CD8-positive, alpha-beta T cell (primary cell): ENCODE measurements at regions of chr11 and their contacts with region 1.

Region 1: DNA sequence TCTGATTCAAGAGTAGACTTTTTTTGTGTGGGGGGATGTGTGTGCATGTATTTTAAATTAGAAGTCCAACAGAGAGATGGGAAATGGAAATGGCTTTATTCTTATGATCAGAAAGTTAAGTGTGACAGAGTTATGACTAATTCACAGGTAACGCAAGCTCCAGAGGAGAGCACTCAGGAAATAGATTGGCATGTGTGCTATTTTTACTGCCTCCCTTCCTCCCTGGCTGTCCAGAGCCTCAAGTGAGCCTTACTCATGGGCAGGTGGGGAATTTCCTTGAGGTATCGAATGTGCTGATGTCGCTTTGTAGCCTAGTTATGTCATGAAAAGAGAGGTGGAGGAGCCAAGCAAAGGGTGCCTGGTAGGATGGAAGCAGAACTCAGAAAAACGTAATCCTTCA is 70.3 kb upstream of the BDNF start:
- DNase-seq: no peak
- ATAC-seq: no peak
- H3K4me3 ChIP-seq: no peak overlapping the region
- H3K4me3 Mint-ChIP-seq: no peak overlapping the region
- H3K27ac ChIP-seq: no peak overlapping the region
- H3K27ac Mint-ChIP-seq: no peak overlapping the region
- H3K4me1 ChIP-seq: no peaks in the 10 kb centered on the region
- H3K4me1 Mint-ChIP-seq: no peaks in the 10 kb centered on the region
- H3K27me3 ChIP-seq: no peaks in the 10 kb centered on the region
- H3K27me3 Mint-ChIP-seq: no peaks in the 10 kb centered on the region
- CTCF ChIP-seq: no peak

Region 2: DNA sequence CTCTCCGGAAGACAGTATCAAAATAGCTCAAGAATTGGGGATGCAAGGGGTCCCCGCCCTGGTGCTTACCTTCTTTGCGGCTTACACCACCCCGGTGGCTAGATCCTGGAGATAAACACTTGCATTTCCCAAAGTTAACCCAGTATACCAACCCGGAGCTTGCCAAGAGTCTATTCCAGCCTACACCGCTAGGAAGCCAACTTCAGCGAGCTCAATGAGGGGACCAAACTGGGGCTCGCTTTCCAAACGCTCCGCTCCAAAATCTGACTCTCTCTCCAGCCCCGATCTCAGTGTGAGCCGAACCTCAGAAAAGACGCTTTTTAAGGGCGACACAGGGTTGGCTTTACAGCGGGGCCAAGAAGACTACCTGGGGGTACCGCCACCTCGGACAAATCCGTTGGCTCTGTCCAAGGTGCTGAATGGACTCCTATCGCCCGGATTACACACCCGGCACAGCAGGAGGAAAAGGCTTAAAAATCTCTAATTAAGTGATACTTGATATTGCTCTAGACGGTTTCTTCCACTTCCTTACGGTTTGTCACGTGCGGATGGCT is 50.2 kb before region 1 on chr11:
- CTCF ChIA-PET with region 1: no interaction called
- POLR2A ChIA-PET with region 1: no interaction called
- intact Hi-C with region 1: no loop called
- DNase-seq: no peak
- ATAC-seq: no peak
- H3K4me3 ChIP-seq: no peak overlapping the region
- H3K4me3 Mint-ChIP-seq: no peak overlapping the region
- H3K27ac ChIP-seq: no peak overlapping the region
- H3K27ac Mint-ChIP-seq: no peak overlapping the region
- H3K4me1 ChIP-seq: no peaks in the 10 kb centered on the region
- H3K4me1 Mint-ChIP-seq: peaks cover 15% of the 10 kb centered on the region
- H3K27me3 ChIP-seq: peaks cover 16 to 20% of the 10 kb centered on the region in 2 experiments
- H3K27me3 Mint-ChIP-seq: peaks cover 65% of the 10 kb centered on the region
- CTCF ChIP-seq: no peak

Region 3: GRCh38 chr11:27735281-27735680 is 35.3 kb before region 1 on chr11:
- CTCF ChIA-PET with region 1: no interaction called
- POLR2A ChIA-PET with region 1: no interaction called
- intact Hi-C with region 1: loop called in 1 of 2 experiments (anchors 1 kb)
- DNase-seq: no peak
- ATAC-seq: no peak
- H3K4me3 ChIP-seq: no peak overlapping the region
- H3K4me3 Mint-ChIP-seq: no peak overlapping the region
- H3K27ac ChIP-seq: no peak overlapping the region
- H3K27ac Mint-ChIP-seq: no peak overlapping the region
- H3K4me1 ChIP-seq: no peaks in the 10 kb centered on the region
- H3K4me1 Mint-ChIP-seq: no peaks in the 10 kb centered on the region
- H3K27me3 ChIP-seq: no peaks in the 10 kb centered on the region
- H3K27me3 Mint-ChIP-seq: peaks cover 3% of the 10 kb centered on the region
- CTCF ChIP-seq: no peak

Region 4: GRCh38 chr11:27830206-27830605 is 59.6 kb after region 1 on chr11:
- CTCF ChIA-PET with region 1: no interaction called
- POLR2A ChIA-PET with region 1: no interaction called
- intact Hi-C with region 1: no loop called
- DNase-seq: no peak
- ATAC-seq: no peak
- H3K4me3 ChIP-seq: no peak overlapping the region
- H3K4me3 Mint-ChIP-seq: no peak overlapping the region
- H3K27ac ChIP-seq: no peak overlapping the region
- H3K27ac Mint-ChIP-seq: no peak overlapping the region
- H3K4me1 ChIP-seq: no peaks in the 10 kb centered on the region
- H3K4me1 Mint-ChIP-seq: no peaks in the 10 kb centered on the region
- H3K27me3 ChIP-seq: no peaks in the 10 kb centered on the region
- H3K27me3 Mint-ChIP-seq: no peaks in the 10 kb centered on the region
- CTCF ChIP-seq: no peak